Activated B cell treated with CpG ODN at 0.5 μM for 24 hours (primary cell): ENCODE measurements at regions of chr7 and their contacts with region 1.

Region 1: GRCh38 chr7:134646425-134647305 is at the start of gene BPGM:
- DNase-seq: peak; percentile 82
- ATAC-seq: peak; percentile 95
- H3K4me3 Mint-ChIP-seq: no peak within 1 kb of the TSS
- H3K27ac Mint-ChIP-seq: no peak within 1 kb of the TSS
- H3K4me1 Mint-ChIP-seq: peaks cover 19% of the 10 kb centered on the region
- H3K27me3 Mint-ChIP-seq: no peaks in the 10 kb centered on the region
- CTCF ChIP-seq: peak; percentile 22
- total RNA-seq, gene BPGM: 10.1 and 10.2 TPM in 2 replicates

Region 2: GRCh38 chr7:134316539-134317344 is 329.9 kb before region 1 on chr7 and contains the start of gene SLC35B4:
- CTCF ChIA-PET with region 1: no interaction called
- POLR2A ChIA-PET with region 1: interaction called, 7 read pairs
- intact Hi-C with region 1: loop called (anchors 2 kb)
- DNase-seq: peak; percentile 89
- ATAC-seq: peak; percentile 97
- H3K4me3 Mint-ChIP-seq: peak within 1 kb of the TSS; percentile 94
- H3K27ac Mint-ChIP-seq: peak within 1 kb of the TSS; percentile 87
- H3K4me1 Mint-ChIP-seq: peaks cover 14% of the 10 kb centered on the region
- H3K27me3 Mint-ChIP-seq: peaks cover 4% of the 10 kb centered on the region
- CTCF ChIP-seq: no peak
- total RNA-seq, gene SLC35B4: 17.1 and 22.0 TPM in 2 replicates

Region 3: GRCh38 chr7:134657526-134657925 is 10.9 kb after region 1 on chr7:
- CTCF ChIA-PET with region 1: no interaction called
- POLR2A ChIA-PET with region 1: interaction called, 14 read pairs
- intact Hi-C with region 1: no loop called
- DNase-seq: no peak
- ATAC-seq: no peak
- H3K4me3 Mint-ChIP-seq: no peak overlapping the region
- H3K27ac Mint-ChIP-seq: no peak overlapping the region
- H3K4me1 Mint-ChIP-seq: peaks cover 3% of the 10 kb centered on the region
- H3K27me3 Mint-ChIP-seq: no peaks in the 10 kb centered on the region
- CTCF ChIP-seq: no peak

Region 4: GRCh38 chr7:134986363-134987251 is 339.9 kb after region 1 on chr7 and contains the start of gene AGBL3:
- CTCF ChIA-PET with region 1: interaction called, 7 read pairs
- POLR2A ChIA-PET with region 1: interaction called, 25 read pairs
- intact Hi-C with region 1: loop called (anchors 2 kb)
- DNase-seq: peak; percentile 86
- ATAC-seq: peak; percentile 89
- H3K4me3 Mint-ChIP-seq: peak within 1 kb of the TSS; percentile 99
- H3K27ac Mint-ChIP-seq: peak within 1 kb of the TSS; percentile 99
- H3K4me1 Mint-ChIP-seq: peaks cover 26% of the 10 kb centered on the region
- H3K27me3 Mint-ChIP-seq: no peaks in the 10 kb centered on the region
- CTCF ChIP-seq: peak; percentile 63
- total RNA-seq, gene AGBL3: 6.1 and 9.6 TPM in 2 replicates

Region 5: DNA sequence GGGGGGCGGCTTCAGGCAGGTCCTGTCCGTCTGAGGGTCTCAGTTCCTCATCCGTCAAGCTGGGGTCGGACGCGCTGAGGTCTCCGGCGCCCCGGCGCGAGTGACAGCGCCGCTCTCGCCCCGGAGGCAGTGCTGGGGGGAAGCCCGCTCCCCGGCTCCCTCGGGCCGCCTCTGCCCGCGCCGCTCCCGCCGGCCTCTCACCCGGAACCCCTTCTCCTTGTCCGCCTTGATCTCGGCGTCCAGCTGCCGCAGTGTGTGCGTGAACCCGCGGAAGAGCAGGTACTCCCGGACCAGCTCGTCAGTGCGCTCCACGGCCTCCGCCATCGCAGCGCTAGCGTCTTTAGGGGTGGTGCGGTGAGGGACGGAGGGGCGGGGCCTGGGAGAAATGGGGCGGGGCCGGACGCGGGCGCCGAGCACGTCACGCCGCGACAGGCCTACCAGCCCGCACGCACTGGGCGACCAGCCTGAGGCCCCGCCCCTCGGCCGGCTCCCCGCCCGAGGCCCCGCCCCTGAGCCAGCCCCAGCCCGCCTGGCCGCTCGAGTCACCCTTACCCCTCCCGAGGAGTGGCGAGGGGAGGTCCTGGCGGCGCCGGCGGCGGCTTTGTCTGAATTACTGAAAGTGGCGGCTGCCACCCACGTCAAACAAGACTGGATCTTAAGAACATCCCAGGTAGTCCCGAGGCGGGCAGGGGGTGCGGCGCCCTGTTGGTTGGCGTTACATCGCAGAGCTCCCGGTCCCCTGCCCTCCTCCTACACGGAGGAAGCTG is 564.7 kb after region 1 on chr7 and contains the start of gene WDR91:
- CTCF ChIA-PET with region 1: no interaction called
- POLR2A ChIA-PET with region 1: interaction called, 3 read pairs
- intact Hi-C with region 1: loop called (anchors 1 kb)
- DNase-seq: peak; percentile 87
- ATAC-seq: peak; percentile 92
- H3K4me3 Mint-ChIP-seq: peak within 1 kb of the TSS; percentile 97
- H3K27ac Mint-ChIP-seq: peak within 1 kb of the TSS; percentile 97
- H3K4me1 Mint-ChIP-seq: peaks cover 40% of the 10 kb centered on the region
- H3K27me3 Mint-ChIP-seq: no peaks in the 10 kb centered on the region
- CTCF ChIP-seq: no peak
- total RNA-seq, gene WDR91: 59.5 and 60.1 TPM in 2 replicates

Region 6: DNA sequence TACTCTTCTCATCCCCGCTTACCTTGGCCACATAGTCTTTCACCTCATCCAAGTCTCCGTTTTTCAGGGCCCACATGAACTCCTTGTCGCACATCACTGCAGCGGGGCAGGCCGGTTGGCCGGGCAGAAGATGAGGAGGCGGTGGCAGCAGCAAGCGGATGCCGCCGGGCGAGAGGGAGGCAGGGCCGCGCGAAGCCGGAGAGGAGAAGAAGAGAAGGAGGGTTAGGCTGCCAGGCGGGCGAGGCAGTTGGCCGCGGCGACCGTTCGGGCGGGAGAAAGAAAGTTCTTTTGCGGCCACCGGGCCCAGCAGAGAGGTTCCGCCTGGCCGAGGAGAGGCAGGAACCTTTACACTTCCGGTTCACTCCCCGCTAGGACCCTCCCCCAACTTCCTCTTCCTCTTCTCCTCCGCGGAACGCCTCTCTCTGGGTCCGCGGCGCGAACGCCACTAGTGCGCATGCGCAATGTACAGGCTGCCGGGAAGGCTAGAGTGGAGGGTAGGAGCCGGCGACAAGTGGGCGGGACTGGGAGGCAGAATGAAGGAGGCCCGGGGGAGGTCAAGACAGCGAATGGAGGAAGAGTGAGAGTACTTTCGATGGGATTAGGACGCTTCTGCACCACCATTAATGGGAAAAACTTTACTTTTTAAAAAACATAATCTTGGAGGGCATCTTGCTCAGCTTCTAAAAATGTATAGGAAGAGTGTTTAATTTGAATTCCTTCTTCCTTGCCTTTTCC is 1330.5 kb after region 1 on chr7 and contains the start of gene MTPN:
- CTCF ChIA-PET with region 1: no interaction called
- POLR2A ChIA-PET with region 1: no interaction called
- intact Hi-C with region 1: loop called (anchors 1 kb)
- DNase-seq: peak; percentile 92
- ATAC-seq: peak; percentile 75
- H3K4me3 Mint-ChIP-seq: peak within 1 kb of the TSS; percentile 99
- H3K27ac Mint-ChIP-seq: peak within 1 kb of the TSS; percentile 99
- H3K4me1 Mint-ChIP-seq: peaks cover 89% of the 10 kb centered on the region
- H3K27me3 Mint-ChIP-seq: no peaks in the 10 kb centered on the region
- CTCF ChIP-seq: no peak
- total RNA-seq, gene MTPN: 130 and 137 TPM in 2 replicates